Endothelial cell of umbilical vein (primary cell): ENCODE measurements at regions of chr20 and their contacts with region 1.

Region 1: DNA sequence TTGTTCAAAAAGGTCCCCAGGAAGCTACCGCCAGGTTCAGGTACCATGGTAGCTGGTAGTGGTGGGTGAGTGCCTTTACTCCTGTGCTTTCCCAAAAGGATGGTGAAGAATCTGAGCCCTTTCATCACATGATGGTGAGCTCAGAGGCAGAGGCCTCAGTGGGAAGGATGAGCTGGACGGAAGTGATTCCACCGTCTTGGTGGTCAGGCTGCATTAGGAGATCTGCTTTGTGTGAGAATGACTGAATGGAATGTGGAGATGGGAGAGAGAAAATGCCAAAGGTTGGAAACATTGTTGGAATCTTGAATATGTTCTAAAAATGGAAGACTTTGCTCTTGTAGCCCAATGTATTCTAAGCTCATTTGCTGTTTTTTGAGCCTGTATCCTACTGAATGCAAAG is 108.1 kb upstream of the SCP2D1 start:
- DNase-seq: no peak
- H3K4me3 ChIP-seq: no peak overlapping the region
- H3K27ac ChIP-seq: no peak overlapping the region
- H3K4me1 ChIP-seq: no peaks in the 10 kb centered on the region
- H3K27me3 ChIP-seq: no peaks in the 10 kb centered on the region
- CTCF ChIP-seq: no peak
- POLR2A ChIP-seq: no peak

Region 2: GRCh38 chr20:18613556-18613955 is 91.9 kb before region 1 on chr20:
- CTCF ChIA-PET with region 1: no interaction called
- POLR2A ChIA-PET with region 1: no interaction called
- dilution Hi-C with region 1: no loop called
- intact Hi-C with region 1: no loop called
- DNase-seq: no peak
- H3K4me3 ChIP-seq: no peak overlapping the region
- H3K27ac ChIP-seq: no peak overlapping the region
- H3K4me1 ChIP-seq: no peaks in the 10 kb centered on the region
- H3K27me3 ChIP-seq: no peaks in the 10 kb centered on the region
- CTCF ChIP-seq: no peak
- POLR2A ChIP-seq: no peak

Region 3: DNA sequence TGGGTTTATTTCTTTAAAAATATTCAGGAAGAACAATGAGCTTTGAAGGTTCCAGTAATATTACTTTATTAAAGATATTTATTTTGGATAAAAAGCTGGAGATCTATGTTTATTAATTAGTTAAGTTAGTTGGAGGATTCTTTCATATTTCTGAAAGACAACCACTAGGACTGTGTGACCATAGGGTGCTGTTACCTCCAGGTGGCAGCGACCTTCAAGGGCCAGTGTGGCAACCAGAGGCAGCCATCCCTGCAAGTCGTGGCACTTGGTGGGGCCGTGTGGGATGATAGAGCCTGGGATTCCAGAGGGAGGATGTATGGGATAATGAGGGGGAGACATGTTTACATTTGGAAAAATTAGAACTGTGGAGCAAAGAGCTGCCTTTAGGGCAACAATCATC is 12.6 kb after region 1 on chr20:
- CTCF ChIA-PET with region 1: interaction called, 17 read pairs
- POLR2A ChIA-PET with region 1: no interaction called
- dilution Hi-C with region 1: no loop called
- intact Hi-C with region 1: no loop called
- DNase-seq: no peak
- H3K4me3 ChIP-seq: no peak overlapping the region
- H3K27ac ChIP-seq: no peak overlapping the region
- H3K4me1 ChIP-seq: no peaks in the 10 kb centered on the region
- H3K27me3 ChIP-seq: no peaks in the 10 kb centered on the region
- CTCF ChIP-seq: no peak
- POLR2A ChIP-seq: no peak